Panc1 (cell line): ENCODE measurements at regions of chr2 and their contacts with region 1.

Region 1: DNA sequence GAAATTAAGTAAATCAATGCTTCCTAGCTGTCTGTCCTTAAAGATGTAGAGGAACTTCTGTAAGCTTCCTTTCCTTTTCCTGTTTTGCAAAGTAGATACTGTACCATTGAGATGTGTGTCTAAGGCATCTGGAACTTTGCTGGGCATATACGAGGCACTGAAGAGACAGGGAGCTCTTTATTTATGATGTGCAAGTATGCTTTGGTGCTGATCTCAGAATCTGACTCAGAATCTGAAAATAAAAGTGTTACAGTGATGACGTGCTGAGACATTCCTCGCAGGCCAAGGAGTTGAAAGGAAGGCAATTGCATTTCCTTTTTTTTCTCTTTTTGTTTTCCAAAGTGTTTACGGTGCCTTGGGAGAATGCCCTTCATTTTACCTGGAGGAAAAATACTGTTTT is 230.9 kb upstream of the RGPD4 start:
- DNase-seq: no peak
- ATAC-seq: no peak
- H3K4me3 ChIP-seq: no peak overlapping the region
- H3K27ac ChIP-seq: no peak overlapping the region
- H3K4me1 ChIP-seq: no peaks in the 10 kb centered on the region
- H3K27me3 ChIP-seq: no peaks in the 10 kb centered on the region
- CTCF ChIP-seq: no peak

Region 2: GRCh38 chr2:107801498-107801897 is 205.7 kb after region 1 on chr2:
- CTCF ChIA-PET with region 1: no interaction called
- POLR2A ChIA-PET with region 1: interaction called, 15 read pairs
- in situ Hi-C with region 1: no loop called
- intact Hi-C with region 1: no loop called
- DNase-seq: no peak
- ATAC-seq: no peak
- H3K4me3 ChIP-seq: no peak overlapping the region
- H3K27ac ChIP-seq: no peak overlapping the region
- H3K4me1 ChIP-seq: no peaks in the 10 kb centered on the region
- H3K27me3 ChIP-seq: no peaks in the 10 kb centered on the region
- CTCF ChIP-seq: no peak

Region 3: DNA sequence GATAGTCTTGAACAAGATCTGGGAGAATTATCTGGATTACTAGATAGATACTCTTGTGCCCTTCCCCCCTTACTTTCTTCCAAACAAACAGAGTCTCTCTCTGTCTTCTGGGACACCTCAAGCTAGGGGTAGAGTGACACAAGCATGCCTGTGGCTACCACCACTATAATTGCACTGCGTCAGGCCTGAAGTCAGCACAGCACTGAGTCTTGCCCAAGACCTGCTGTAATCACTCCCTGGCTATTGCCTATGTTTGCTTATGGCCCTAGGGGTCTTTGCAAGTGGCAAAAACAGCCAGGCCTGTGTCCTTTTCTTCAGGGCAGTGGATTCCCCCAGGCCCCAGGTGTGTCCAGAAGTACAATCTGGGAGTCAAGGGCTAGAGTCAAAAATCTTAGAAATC is 497.1 kb after region 1 on chr2:
- CTCF ChIA-PET with region 1: no interaction called
- POLR2A ChIA-PET with region 1: no interaction called
- in situ Hi-C with region 1: no loop called
- intact Hi-C with region 1: no loop called
- DNase-seq: no peak
- ATAC-seq: no peak
- H3K4me3 ChIP-seq: no peak overlapping the region
- H3K27ac ChIP-seq: no peak overlapping the region
- H3K4me1 ChIP-seq: no peaks in the 10 kb centered on the region
- H3K27me3 ChIP-seq: no peaks in the 10 kb centered on the region
- CTCF ChIP-seq: no peak

Region 4: GRCh38 chr2:108971661-108972566 is 1376.2 kb after region 1 on chr2:
- CTCF ChIA-PET with region 1: no interaction called
- POLR2A ChIA-PET with region 1: no interaction called
- in situ Hi-C with region 1: no loop called
- intact Hi-C with region 1: no loop called
- DNase-seq: no peak
- ATAC-seq: peak; percentile 63
- H3K4me3 ChIP-seq: no peak overlapping the region
- H3K27ac ChIP-seq: no peak overlapping the region
- H3K4me1 ChIP-seq: no peaks in the 10 kb centered on the region; the same call in 1 of the 2 replicates
- H3K27me3 ChIP-seq: no peaks in the 10 kb centered on the region
- CTCF ChIP-seq: no peak